ENCODE measurements at regions of chr11 and their contacts with region 1.

Region 1: GRCh38 chr11:8099291-8099899 is 18.4 kb downstream of the TUB start:
- DNase-seq: peak; percentile 75
- H3K4me3 Mint-ChIP-seq: no peak overlapping the region
- H3K27ac Mint-ChIP-seq: no peak overlapping the region
- H3K4me1 Mint-ChIP-seq: no peaks in the 10 kb centered on the region
- H3K27me3 Mint-ChIP-seq: no peaks in the 10 kb centered on the region
- CTCF ChIP-seq: peak; percentile 95

Region 2: GRCh38 chr11:7892840-7893254 is 206.5 kb before region 1 on chr11:
- CTCF ChIA-PET with region 1: interaction called, 9 read pairs
- POLR2A ChIA-PET with region 1: no interaction called
- intact Hi-C with region 1: loop called (anchors 2 kb)
- DNase-seq: peak; percentile 66
- H3K4me3 Mint-ChIP-seq: no peak overlapping the region
- H3K27ac Mint-ChIP-seq: peak overlapping the region; percentile 54
- H3K4me1 Mint-ChIP-seq: peaks cover 26% of the 10 kb centered on the region
- H3K27me3 Mint-ChIP-seq: no peaks in the 10 kb centered on the region
- CTCF ChIP-seq: peak; percentile 68

Region 3: GRCh38 chr11:8018484-8019313 is 80.7 kb before region 1 on chr11:
- CTCF ChIA-PET with region 1: interaction called, 61 read pairs
- POLR2A ChIA-PET with region 1: no interaction called
- intact Hi-C with region 1: no loop called
- DNase-seq: no peak
- H3K4me3 Mint-ChIP-seq: peak overlapping the region; percentile 62
- H3K27ac Mint-ChIP-seq: no peak overlapping the region
- H3K4me1 Mint-ChIP-seq: peaks cover 12% of the 10 kb centered on the region
- H3K27me3 Mint-ChIP-seq: peaks cover 47% of the 10 kb centered on the region
- CTCF ChIP-seq: no peak

Region 4: DNA sequence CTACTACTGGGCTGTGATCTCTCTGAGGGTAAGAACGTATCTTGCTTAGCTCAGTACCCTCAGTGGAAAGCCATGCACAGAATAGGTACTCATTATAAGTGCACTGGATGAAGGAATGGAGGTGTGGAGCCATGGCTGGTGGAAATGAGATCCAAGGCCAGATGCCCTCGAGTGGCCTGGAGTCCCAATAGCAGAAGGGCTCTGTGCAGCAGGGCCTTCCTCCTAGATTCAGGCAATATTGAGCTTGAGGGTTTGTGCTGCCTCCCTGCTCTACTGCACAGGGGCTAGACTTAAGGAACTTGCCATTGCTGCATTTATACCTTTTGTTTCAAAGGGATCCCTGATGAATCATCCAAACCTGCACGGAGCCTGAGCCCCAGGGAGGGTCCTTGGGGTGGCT is 52.0 kb before region 1 on chr11:
- CTCF ChIA-PET with region 1: interaction called, 786 read pairs
- POLR2A ChIA-PET with region 1: no interaction called
- intact Hi-C with region 1: no loop called
- DNase-seq: no peak
- H3K4me3 Mint-ChIP-seq: no peak overlapping the region
- H3K27ac Mint-ChIP-seq: no peak overlapping the region
- H3K4me1 Mint-ChIP-seq: no peaks in the 10 kb centered on the region
- H3K27me3 Mint-ChIP-seq: peaks cover 66% of the 10 kb centered on the region
- CTCF ChIP-seq: no peak

Region 5: DNA sequence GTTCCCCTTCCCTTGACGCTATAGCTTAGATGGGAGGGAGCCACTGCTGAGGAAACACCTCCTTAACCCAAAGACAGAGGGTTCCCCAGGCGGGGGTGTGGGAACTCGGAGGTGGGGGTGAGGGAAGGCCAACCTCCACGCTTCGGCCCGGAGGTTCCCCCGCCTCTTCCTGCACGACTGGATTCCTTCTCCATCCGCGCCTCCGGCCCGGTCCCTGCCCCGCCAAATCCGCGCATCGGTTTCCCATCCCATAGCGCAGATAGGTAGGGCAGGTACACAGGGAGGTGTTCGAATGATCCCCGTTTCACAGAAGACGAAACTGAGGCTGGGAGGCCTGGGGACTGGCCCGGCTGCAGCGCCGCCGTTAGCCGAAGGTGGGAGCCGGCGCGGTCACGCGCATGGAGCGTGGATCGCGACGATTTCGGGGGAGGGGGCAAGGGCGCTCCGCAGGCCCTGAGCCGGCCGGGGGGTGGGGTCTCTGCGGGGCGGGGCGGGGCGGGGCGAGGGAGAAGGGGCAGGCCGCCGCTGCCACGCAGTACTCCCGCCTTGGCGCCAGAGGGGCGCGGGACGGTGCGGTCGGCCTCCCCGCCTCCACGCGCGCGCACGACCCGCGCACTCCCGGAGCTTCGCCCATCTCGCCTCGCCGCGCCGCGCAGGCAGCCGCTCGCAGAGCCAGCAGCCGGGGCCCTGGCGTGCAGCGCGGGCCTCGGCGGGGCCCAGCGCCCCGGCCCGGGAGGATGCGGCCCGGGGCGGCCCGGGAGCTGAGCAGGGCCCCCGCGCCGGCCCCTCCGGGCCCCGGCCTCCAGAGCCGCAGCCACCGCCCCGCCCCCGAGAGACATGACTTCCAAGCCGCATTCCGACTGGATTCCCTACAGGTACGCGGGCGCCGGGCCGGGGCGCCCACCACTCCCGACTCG is 18.5 kb before region 1 on chr11 and contains the start of gene TUB:
- CTCF ChIA-PET with region 1: interaction called, 116 read pairs
- POLR2A ChIA-PET with region 1: interaction called, 5 read pairs
- intact Hi-C with region 1: no loop called
- DNase-seq: no peak
- H3K4me3 Mint-ChIP-seq: peak within 1 kb of the TSS; percentile 57
- H3K27ac Mint-ChIP-seq: no peak within 1 kb of the TSS
- H3K4me1 Mint-ChIP-seq: no peaks in the 10 kb centered on the region
- H3K27me3 Mint-ChIP-seq: peaks cover 7% of the 10 kb centered on the region
- CTCF ChIP-seq: no peak
- total RNA-seq, gene TUB: 1.4 and 1.8 TPM in 2 replicates

Region 6: DNA sequence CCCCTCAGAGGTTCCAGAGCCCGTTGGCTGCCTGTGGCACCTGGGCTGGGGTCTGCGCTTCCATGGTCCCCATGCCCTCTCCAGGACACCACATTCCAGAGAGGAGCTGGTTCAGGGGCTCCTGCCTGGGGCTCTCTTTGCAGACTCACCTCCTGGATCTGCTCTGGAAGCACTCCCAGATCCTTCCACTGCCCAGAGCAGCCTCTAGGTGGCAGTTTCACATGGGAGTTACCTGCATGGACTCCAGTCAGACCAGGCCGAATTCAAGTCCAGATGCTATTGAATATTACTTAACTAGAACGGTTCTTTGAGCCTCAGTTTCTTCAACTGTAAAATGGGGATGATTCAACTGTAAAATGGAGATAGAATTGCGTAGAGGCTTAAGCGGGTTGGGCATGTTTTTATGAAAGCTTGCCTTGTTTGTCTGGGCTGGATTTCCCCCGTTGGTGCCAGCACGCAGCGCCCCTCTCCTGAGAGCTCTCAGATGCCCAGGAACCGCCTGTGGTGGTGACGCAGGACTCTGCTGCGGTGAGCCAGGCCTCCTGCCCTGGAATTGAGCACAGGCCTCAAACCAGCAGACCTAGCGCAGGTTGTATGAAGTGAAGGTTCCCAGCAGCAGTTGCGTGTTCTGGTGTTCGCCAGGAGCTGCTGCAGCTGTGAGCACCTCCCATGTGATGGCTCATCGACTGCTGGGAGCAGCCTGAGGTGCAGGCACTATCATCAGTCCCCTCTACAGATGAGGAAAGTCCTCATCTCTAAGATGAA is 120.0 kb after region 1 on chr11:
- CTCF ChIA-PET with region 1: interaction called, 10 read pairs
- POLR2A ChIA-PET with region 1: no interaction called
- intact Hi-C with region 1: no loop called
- DNase-seq: peak; percentile 65
- H3K4me3 Mint-ChIP-seq: no peak overlapping the region
- H3K27ac Mint-ChIP-seq: no peak overlapping the region
- H3K4me1 Mint-ChIP-seq: no peaks in the 10 kb centered on the region
- H3K27me3 Mint-ChIP-seq: peaks cover 14% of the 10 kb centered on the region
- CTCF ChIP-seq: peak; percentile 72

Region 7: GRCh38 chr11:8426076-8426475 is 326.7 kb after region 1 on chr11:
- CTCF ChIA-PET with region 1: no interaction called
- POLR2A ChIA-PET with region 1: no interaction called
- intact Hi-C with region 1: no loop called
- DNase-seq: no peak
- H3K4me3 Mint-ChIP-seq: no peak overlapping the region
- H3K27ac Mint-ChIP-seq: no peak overlapping the region
- H3K4me1 Mint-ChIP-seq: no peaks in the 10 kb centered on the region
- H3K27me3 Mint-ChIP-seq: peaks cover 56% of the 10 kb centered on the region
- CTCF ChIP-seq: no peak